Dendritic cell treated with granulocyte-macrophage colony-stimulating factor and Interleukin-4, amounts not matched to agents 40 ng/mL and 50 ng/mL, for 4 days (primary cell): ENCODE measurements at regions of chr10 and their contacts with region 1.

Region 1: GRCh38 chr10:88880282-88881076 is 434 bp downstream of the STAMBPL1 start:
- H3K4me3 Mint-ChIP-seq: peak overlapping the region; percentile 97
- H3K27ac Mint-ChIP-seq: peak overlapping the region; percentile 93
- H3K4me1 Mint-ChIP-seq: peaks cover 29% of the 10 kb centered on the region
- H3K27me3 Mint-ChIP-seq: no peaks in the 10 kb centered on the region

Region 2: GRCh38 chr10:88841316-88842111 is 39.0 kb before region 1 on chr10:
- intact Hi-C with region 1: loop called (anchors 5 kb)
- H3K4me3 Mint-ChIP-seq: no peak overlapping the region
- H3K27ac Mint-ChIP-seq: peak overlapping the region; percentile 88
- H3K4me1 Mint-ChIP-seq: peaks cover 6% of the 10 kb centered on the region
- H3K27me3 Mint-ChIP-seq: no peaks in the 10 kb centered on the region

Region 3: DNA sequence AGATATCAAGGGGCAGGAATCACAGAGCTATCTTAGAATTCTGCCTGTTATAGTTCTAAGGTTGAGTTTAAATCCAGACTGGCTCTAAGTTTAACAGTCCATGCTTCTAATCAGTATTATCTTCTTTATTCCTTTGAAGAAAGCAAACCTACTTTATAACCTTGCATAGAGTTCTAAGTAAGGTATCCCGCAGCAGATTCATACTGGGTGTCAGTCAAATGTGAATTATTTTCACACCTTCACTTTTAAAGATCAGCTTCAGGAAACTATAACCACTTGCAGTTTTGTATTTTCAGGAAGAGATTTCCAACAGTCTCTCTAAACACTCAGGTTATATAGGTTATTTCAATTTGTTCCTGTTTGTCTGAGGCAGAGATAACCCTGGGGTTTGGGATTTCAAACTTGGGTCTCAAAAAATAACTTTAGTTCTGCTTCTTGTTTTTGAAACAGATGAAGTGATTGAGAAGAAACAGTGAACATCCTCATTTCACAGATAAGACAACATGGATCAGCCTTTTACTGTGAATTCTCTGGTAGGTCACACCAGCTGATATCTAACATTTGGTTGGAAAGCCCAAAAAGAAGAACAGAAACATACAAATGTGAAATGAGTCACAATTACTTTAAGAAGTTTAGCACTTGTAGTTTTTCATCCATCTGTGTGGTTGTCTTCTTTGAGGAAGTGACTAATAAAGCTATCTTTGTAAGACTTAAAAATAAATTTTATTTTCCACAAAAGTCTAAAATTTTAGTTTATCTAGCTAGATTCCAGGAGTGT is 20.9 kb after region 1 on chr10:
- intact Hi-C with region 1: loop called (anchors 1 kb)
- H3K4me3 Mint-ChIP-seq: no peak overlapping the region
- H3K27ac Mint-ChIP-seq: peak overlapping the region; percentile 92
- H3K4me1 Mint-ChIP-seq: peaks cover 40% of the 10 kb centered on the region
- H3K27me3 Mint-ChIP-seq: no peaks in the 10 kb centered on the region

Region 4: GRCh38 chr10:89047397-89047796 is 166.9 kb after region 1 on chr10:
- intact Hi-C with region 1: no loop called
- H3K4me3 Mint-ChIP-seq: no peak overlapping the region
- H3K27ac Mint-ChIP-seq: peak overlapping the region; percentile 55
- H3K4me1 Mint-ChIP-seq: peaks cover 41% of the 10 kb centered on the region
- H3K27me3 Mint-ChIP-seq: no peaks in the 10 kb centered on the region